Aorta (tissue), 5 donors: ENCODE measurements at regions of chr4 and their contacts with region 1.

Region 1: DNA sequence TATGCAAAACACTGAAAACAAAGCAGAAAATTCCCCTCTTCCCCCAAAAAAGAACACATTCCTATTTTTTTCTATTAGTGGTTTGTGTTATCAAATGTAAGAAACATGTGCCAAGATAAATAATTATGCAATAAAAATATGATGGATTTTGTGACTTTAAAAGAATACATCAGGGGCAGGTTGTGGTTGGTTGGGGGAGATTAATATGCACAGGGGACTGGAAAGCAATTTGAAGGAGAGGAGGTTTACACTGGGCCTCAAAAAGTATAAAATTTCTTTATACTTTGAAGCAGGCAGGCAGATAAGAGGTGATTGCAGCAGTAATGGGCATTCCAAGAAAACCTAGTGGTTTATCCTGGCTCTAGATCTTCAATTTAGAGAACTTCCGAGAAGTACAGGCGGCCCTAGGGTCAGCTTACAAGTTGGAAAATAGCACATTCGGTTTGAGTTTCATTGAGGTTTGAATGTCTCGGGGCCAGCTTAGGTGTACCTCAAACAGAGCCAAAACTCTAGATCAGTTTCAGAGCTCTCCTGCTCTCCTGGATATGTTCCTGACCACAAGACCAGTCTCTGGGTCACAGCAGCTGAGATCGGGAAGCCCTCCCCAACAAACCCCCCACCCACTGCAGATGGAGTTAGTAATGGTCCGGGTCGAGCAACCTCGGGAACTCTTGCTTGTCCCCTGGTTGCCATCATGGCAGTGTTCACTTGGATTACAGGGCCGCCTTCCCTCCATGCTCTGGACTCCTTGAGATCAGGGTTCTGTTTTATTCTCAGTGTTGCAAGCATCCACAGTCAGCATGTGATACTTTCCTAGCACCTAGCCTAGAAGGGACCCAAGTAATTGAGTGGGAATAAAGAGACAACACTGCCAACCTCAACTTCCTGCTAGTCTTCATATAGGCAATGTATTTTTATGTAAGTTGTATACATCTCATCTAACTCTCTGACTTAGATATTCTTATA is 112.1 kb upstream of the DDIT4L start:
- DNase-seq: peak in 1 of 2 donors; percentile 49
- ATAC-seq: no peak
- H3K4me3 ChIP-seq: no peak overlapping the region
- H3K27ac ChIP-seq: peak overlapping the region in 1 of 2 donors; percentile 27
- H3K4me1 ChIP-seq: peaks cover 2 to 5% of the 10 kb centered on the region in 2 donors
- H3K27me3 ChIP-seq: no peaks in the 10 kb centered on the region

Region 2: DNA sequence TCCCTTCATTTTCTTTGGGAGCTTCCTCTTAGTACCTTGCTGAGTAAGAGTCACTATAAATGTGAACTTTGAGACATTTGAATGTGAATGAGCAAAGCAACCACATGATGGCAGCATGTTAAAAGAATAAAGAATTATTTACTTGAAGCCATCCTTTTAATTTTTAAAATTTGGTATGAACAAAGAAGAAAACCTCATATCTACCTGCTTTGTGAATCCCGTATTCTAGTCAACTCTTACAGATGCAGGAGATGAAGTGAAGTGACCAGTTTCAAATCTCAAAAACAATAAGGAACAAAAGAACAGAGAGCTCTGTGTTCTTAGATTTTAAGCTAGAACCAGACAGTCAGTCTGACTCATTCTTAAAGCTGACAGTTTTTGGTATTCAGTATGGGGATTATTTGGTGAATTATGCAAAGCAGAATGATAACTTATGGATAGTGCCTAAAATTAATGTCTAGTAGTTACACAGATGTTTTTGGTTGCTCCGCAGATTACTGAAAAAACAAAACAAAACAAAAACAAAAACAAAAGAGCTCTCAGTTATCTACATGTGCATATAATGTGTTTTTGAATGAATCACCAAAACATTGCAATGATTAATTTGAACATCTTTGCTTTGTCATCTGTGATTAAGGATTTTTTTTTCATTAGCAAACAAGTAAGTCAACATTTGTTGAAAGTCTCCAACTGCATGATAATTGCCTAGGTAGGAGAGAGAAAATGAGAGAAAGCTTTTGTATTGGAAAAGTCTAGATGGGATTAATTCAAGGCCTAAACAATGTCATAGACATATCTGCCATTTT is 304.1 kb before region 1 on chr4:
- intact Hi-C with region 1: no loop called
- DNase-seq: no peak
- ATAC-seq: no peak
- H3K4me3 ChIP-seq: no peak overlapping the region
- H3K27ac ChIP-seq: no peak overlapping the region
- H3K4me1 ChIP-seq: no peaks in the 10 kb centered on the region
- H3K27me3 ChIP-seq: no peaks in the 10 kb centered on the region

Region 3: GRCh38 chr4:100095729-100096595 is 206.4 kb before region 1 on chr4:
- intact Hi-C with region 1: loop called in 1 of 2 experiments (anchors 5 kb)
- DNase-seq: peak; percentile 75 to 79
- ATAC-seq: peak; percentile 83
- H3K4me3 ChIP-seq: no peak overlapping the region
- H3K27ac ChIP-seq: no peak overlapping the region
- H3K4me1 ChIP-seq: no peaks in the 10 kb centered on the region
- H3K27me3 ChIP-seq: no peaks in the 10 kb centered on the region

Region 4: GRCh38 chr4:100362366-100362765 is 60.0 kb after region 1 on chr4:
- intact Hi-C with region 1: no loop called
- DNase-seq: no peak
- ATAC-seq: no peak
- H3K4me3 ChIP-seq: no peak overlapping the region
- H3K27ac ChIP-seq: no peak overlapping the region
- H3K4me1 ChIP-seq: no peaks in the 10 kb centered on the region
- H3K27me3 ChIP-seq: no peaks in the 10 kb centered on the region

Region 5: GRCh38 chr4:100414016-100414790 is 111.9 kb after region 1 on chr4:
- intact Hi-C with region 1: loop called in 1 of 2 experiments (anchors 5 kb)
- DNase-seq: peak in 1 of 2 donors; percentile 25
- ATAC-seq: no peak
- H3K4me3 ChIP-seq: no peak overlapping the region
- H3K27ac ChIP-seq: no peak overlapping the region
- H3K4me1 ChIP-seq: no peaks in the 10 kb centered on the region
- H3K27me3 ChIP-seq: no peaks in the 10 kb centered on the region